ENCODE measurements at regions of chr12 and their contacts with region 1.

Region 1: DNA sequence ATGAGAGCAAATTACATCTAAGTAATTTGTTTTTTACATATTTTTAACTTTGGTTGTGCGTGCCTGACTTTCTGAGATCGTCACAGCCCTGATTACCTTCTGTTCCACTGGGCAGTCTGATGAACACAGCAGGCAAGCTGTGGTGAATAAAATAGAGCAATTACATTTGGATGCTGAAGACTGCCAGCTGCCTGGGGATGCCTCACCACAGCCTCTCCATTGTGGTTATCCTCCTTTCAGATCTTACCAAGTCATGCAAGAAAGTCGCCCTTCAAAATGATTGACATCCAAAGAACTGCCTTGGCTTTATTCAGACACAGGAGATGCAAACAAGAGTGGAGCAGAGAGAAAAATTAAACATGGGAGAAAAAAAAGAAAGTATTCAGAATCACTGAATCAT is 456.6 kb upstream of the TMPO start:
- DNase-seq: no peak

Region 2: GRCh38 chr12:96948782-96949181 is 1110.1 kb before region 1 on chr12:
- intact Hi-C with region 1: loop called in 1 of 2 experiments (anchors 5 kb)
- DNase-seq: no peak

Measured in posterior vena cava (tissue), 2 donors.